Activated T-helper 2 cell treated with anti-CD3 and anti-CD28 coated beads, Interferon-gamma antibody, Interleukin-2, Interleukin-4, amounts not matched to agents 10 μg/mL and 5 μg/mL and 100 μg/mL, durations not matched to agents 14 hours and 24 hours and 36 hours (primary cell): ENCODE measurements at regions of chr5 and their contacts with region 1.

Region 1: GRCh38 chr5:36928947-36929346 is 52.4 kb downstream of the NIPBL start:
- DNase-seq: no peak
- H3K4me3 Mint-ChIP-seq: no peak overlapping the region
- H3K27ac Mint-ChIP-seq: no peak overlapping the region
- H3K4me1 Mint-ChIP-seq: peaks cover 27% of the 10 kb centered on the region
- H3K27me3 Mint-ChIP-seq: no peaks in the 10 kb centered on the region

Region 2: DNA sequence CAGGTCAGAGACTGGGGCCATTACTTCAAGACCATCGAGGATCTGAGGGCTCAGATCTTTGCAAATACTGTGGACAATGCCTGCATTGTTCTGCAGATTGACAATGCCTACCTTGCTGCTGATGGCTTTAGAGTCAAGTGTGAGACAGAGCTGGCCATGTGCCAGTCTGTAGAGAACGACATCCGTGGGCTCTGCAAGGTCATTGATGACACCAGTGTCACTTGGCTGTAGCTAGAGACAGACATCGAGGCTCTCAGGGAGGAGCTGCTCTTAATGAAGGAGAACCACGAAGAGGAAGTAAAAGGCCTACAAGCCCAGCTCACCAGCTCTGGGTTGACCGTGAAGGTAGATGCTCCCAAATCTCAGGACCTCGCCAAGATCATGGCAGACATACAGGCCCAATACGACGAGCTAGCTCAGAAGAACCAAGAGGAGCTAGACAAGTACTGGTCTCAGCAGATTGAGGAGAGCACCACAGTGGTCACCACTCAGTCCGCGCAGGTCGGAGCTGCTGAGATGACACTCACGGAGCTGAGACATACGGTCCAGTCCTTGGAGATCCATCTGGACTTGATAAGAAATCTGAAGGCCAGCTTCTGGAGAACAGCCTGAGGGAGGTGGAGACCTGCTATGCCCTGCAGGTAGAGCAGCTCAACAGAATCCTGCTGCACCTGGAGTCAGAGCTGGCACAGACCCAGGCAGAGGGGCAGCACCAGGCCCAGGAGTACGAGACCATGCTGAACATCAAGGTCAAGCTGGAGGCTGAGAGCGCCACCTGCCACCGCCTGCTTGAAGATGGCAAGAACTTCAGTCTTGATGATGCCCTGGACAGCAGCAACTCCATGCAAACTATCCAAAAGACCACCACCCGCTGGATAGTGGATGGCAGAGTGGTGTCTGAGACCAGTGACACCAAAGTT is 43.1 kb before region 1 on chr5:
- intact Hi-C with region 1: loop called (anchors 5 kb)
- DNase-seq: no peak
- H3K4me3 Mint-ChIP-seq: no peak overlapping the region
- H3K27ac Mint-ChIP-seq: no peak overlapping the region
- H3K4me1 Mint-ChIP-seq: peaks cover 52% of the 10 kb centered on the region
- H3K27me3 Mint-ChIP-seq: no peaks in the 10 kb centered on the region